ENCODE measurements at regions of chr22 and their contacts with region 1.

Region 1: DNA sequence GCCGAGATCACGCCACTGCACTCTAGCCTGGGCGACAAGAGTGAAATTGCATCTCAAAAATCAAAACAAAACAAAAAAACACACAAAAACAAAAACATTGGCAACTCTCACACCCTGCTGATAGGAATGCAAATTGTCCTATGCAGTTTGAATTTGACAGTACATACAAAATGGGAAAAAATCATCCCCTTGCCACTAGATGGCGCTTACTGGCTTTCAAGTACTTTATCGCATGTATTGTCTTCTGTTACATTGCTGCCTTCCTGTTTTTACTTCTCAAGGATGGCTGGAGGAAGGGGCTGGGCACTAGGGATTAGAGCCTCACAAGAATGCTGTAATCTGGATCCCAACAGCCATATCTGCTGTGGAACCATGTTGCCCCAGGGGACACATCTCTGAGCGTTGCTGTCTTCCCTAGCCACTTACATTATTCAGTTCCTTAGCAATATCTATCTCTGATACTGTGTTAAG is 59.4 kb upstream of the A4GALT start:
- DNase-seq: peak; percentile 51 to 79
- H3K4me3 ChIP-seq: no peak overlapping the region
- H3K27ac ChIP-seq: no peak overlapping the region
- H3K4me1 ChIP-seq: no peaks in the 10 kb centered on the region; the same call in 1 of the 2 replicates
- H3K27me3 ChIP-seq: no peaks in the 10 kb centered on the region
- CTCF ChIP-seq: peak; percentile 95

Region 2: GRCh38 chr22:42662114-42663021 is 117.7 kb before region 1 on chr22:
- CTCF ChIA-PET with region 1: interaction called, 5 read pairs
- POLR2A ChIA-PET with region 1: no interaction called
- intact Hi-C with region 1: loop called (anchors 2 kb)
- DNase-seq: peak in 1 of 2 experiments; percentile 71
- H3K4me3 ChIP-seq: peak overlapping the region; percentile 60
- H3K27ac ChIP-seq: no peak overlapping the region
- H3K4me1 ChIP-seq: no peaks in the 10 kb centered on the region
- H3K27me3 ChIP-seq: no peaks in the 10 kb centered on the region
- CTCF ChIP-seq: peak; percentile 91

Region 3: DNA sequence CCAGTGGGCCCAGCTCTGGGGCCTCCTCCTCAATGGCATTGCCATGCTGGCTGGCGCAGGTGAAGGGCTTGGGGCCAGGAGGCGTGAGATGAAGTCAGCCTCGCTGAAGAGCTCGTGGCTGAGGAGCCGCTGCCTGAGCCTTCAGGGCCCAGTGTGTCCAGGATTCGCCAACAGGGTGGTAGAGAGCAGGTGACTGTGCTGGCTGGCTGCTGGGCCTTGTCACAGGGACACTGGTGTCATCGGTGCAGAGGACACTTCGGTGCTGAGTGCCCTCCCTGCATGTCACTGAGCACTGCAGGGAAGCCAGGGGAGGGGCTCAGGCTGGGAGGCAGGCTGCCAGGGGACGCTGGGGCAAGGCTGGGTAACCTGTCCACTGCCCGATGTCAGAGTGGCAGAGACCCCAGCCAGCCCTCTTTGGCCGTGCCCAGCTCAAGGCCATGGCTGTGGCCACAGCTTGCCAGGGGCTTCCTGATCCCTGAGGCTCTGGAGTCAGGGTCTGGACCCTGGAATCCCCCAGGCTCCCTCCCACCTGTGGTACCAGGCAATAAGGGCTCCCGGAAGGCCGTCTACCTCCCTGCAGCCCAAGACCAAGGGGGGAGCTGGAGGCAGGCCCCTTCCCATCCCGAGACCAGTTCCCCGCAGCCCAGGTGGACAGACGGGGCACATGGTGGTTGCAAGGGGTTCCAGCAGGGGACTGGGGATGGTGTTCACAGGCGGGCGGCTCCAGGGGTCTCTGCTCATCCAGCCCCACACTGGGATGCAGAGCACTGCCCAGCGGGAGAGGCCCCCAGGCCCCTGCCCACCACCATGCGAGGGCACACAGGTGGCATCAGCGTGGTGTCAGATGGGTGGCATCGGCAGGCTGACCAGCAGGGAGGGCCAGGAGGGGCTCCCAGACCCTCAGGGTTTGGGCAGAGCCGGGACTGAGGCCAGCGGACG is 13.1 kb after region 1 on chr22:
- CTCF ChIA-PET with region 1: interaction called, 18 read pairs
- POLR2A ChIA-PET with region 1: no interaction called
- intact Hi-C with region 1: no loop called
- DNase-seq: no peak
- H3K4me3 ChIP-seq: no peak overlapping the region
- H3K27ac ChIP-seq: no peak overlapping the region
- H3K4me1 ChIP-seq: no peaks in the 10 kb centered on the region
- H3K27me3 ChIP-seq: no peaks in the 10 kb centered on the region
- CTCF ChIP-seq: no peak

Region 4: GRCh38 chr22:42868751-42869251 is 88.7 kb after region 1 on chr22:
- CTCF ChIA-PET with region 1: interaction called, 3 read pairs
- POLR2A ChIA-PET with region 1: no interaction called
- intact Hi-C with region 1: loop called (anchors 5 kb)
- DNase-seq: no peak
- H3K4me3 ChIP-seq: no peak overlapping the region
- H3K27ac ChIP-seq: peak overlapping the region; percentile 57
- H3K4me1 ChIP-seq: peaks cover 23% of the 10 kb centered on the region
- H3K27me3 ChIP-seq: no peaks in the 10 kb centered on the region
- CTCF ChIP-seq: no peak

Region 5: GRCh38 chr22:43424666-43425630 is 644.8 kb after region 1 on chr22:
- CTCF ChIA-PET with region 1: no interaction called
- POLR2A ChIA-PET with region 1: no interaction called
- intact Hi-C with region 1: no loop called
- DNase-seq: no peak
- H3K4me3 ChIP-seq: no peak overlapping the region
- H3K27ac ChIP-seq: no peak overlapping the region
- H3K4me1 ChIP-seq: no peaks in the 10 kb centered on the region
- H3K27me3 ChIP-seq: peaks cover 99% of the 10 kb centered on the region
- CTCF ChIP-seq: no peak

Measured in PC-9 (cell line).